Endothelial cell of umbilical vein (primary cell): ENCODE measurements at regions of chr15 and their contacts with region 1.

Region 1: GRCh38 chr15:35697549-35698299 is 151.8 kb upstream of the DPH6 start:
- DNase-seq: peak; percentile 97
- H3K4me3 ChIP-seq: peak overlapping the region in 1 of 3 experiments; percentile 18
- H3K27ac ChIP-seq: peak overlapping the region; percentile 92
- H3K4me1 ChIP-seq: peaks cover 37% of the 10 kb centered on the region
- H3K27me3 ChIP-seq: no peaks in the 10 kb centered on the region
- CTCF ChIP-seq: peak; percentile 13 to 19
- POLR2A ChIP-seq: peak; percentile 25

Region 2: DNA sequence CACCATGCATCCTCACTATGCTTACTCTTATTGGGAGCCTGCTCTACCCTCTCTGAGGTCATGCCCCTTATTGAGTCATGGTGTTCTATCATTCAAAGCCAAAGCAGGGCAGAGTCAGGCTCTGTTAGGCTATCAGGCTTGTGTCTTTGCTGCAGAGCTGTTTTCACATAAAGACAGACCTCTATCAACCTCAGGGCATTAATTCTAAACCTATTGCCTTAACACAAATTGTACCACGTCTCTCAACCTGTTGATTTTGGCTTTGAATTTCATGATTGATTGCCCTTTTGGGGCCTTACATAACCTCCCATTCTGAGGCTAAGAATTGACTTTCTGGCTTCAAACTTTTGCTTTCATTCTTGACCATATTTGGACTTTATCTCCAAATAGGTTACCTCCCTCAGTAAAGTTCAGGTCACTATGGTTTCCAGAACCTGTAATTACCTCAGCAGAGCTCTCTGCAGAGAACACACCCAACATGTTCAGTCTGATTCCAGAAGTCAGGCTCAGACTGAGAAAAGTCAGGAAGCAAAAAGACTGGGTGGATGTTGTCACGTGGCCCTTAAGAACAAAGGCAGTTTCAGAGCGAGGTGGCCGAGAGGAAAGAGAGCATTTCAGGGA is 391.3 kb before region 1 on chr15:
- CTCF ChIA-PET with region 1: no interaction called
- POLR2A ChIA-PET with region 1: no interaction called
- dilution Hi-C with region 1: no loop called
- intact Hi-C with region 1: loop called (anchors 5 kb)
- DNase-seq: peak; percentile 83
- H3K4me3 ChIP-seq: peak overlapping the region in 1 of 3 experiments; percentile 12
- H3K27ac ChIP-seq: peak overlapping the region; percentile 99
- H3K4me1 ChIP-seq: peaks cover 60% of the 10 kb centered on the region
- H3K27me3 ChIP-seq: no peaks in the 10 kb centered on the region
- CTCF ChIP-seq: no peak
- POLR2A ChIP-seq: no peak

Region 3: GRCh38 chr15:35657679-35658311 is 39.9 kb before region 1 on chr15:
- CTCF ChIA-PET with region 1: no interaction called
- POLR2A ChIA-PET with region 1: no interaction called
- dilution Hi-C with region 1: no loop called
- intact Hi-C with region 1: no loop called
- DNase-seq: no peak
- H3K4me3 ChIP-seq: no peak overlapping the region
- H3K27ac ChIP-seq: no peak overlapping the region
- H3K4me1 ChIP-seq: no peaks in the 10 kb centered on the region
- H3K27me3 ChIP-seq: peaks cover 0 to 2% of the 10 kb centered on the region in 2 experiments
- CTCF ChIP-seq: no peak
- POLR2A ChIP-seq: no peak

Region 4: GRCh38 chr15:35674873-35675781 is 22.6 kb before region 1 on chr15:
- CTCF ChIA-PET with region 1: interaction called, 16 read pairs
- POLR2A ChIA-PET with region 1: interaction called, 10 read pairs
- dilution Hi-C with region 1: no loop called
- intact Hi-C with region 1: loop called (anchors 1 kb)
- DNase-seq: peak; percentile 62
- H3K4me3 ChIP-seq: no peak overlapping the region
- H3K27ac ChIP-seq: no peak overlapping the region
- H3K4me1 ChIP-seq: peaks cover 46% of the 10 kb centered on the region
- H3K27me3 ChIP-seq: no peaks in the 10 kb centered on the region
- CTCF ChIP-seq: no peak
- POLR2A ChIP-seq: no peak

Region 5: DNA sequence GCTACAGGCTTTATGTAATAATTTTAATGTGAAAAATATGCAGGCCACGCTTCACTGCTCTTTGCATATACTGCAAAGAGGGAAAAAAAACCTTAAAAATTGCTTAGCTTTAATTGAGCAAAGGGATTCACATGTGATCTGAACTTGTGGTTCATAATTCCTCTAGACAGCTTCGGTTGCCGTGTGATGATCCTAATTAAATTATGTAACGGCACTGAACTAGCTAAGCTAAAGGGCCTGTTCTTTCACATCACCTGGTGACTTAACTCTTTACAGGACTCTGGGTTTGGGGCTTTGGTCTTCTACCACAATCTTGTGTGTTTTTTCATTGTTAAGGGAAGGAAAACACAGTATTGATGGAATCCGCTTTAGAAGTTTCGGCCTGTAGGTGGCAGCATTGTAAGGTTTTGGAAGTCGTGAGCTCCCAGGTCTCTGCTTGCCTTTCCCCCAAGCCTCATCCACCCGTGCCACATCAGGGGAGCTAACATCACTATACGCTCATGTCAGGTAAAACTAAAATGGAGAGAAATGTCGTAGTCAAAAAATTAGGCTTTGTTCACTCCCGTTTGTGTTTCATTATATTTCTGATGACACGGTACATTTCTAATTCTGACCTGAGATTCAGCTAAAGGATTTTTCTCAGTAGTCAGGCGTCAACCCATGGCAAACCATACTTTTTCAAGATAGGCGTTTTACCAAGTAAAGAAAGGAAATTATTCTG is 53.8 kb after region 1 on chr15:
- CTCF ChIA-PET with region 1: interaction called, 44 read pairs
- POLR2A ChIA-PET with region 1: no interaction called
- dilution Hi-C with region 1: no loop called
- intact Hi-C with region 1: loop called (anchors 1 kb)
- DNase-seq: peak; percentile 85
- H3K4me3 ChIP-seq: no peak overlapping the region
- H3K27ac ChIP-seq: no peak overlapping the region
- H3K4me1 ChIP-seq: peaks cover 3% of the 10 kb centered on the region
- H3K27me3 ChIP-seq: no peaks in the 10 kb centered on the region
- CTCF ChIP-seq: peak; percentile 73 to 77
- POLR2A ChIP-seq: no peak

Region 6: GRCh38 chr15:36039996-36040572 is 342.4 kb after region 1 on chr15:
- CTCF ChIA-PET with region 1: no interaction called
- POLR2A ChIA-PET with region 1: no interaction called
- dilution Hi-C with region 1: no loop called
- intact Hi-C with region 1: no loop called
- DNase-seq: no peak
- H3K4me3 ChIP-seq: no peak overlapping the region
- H3K27ac ChIP-seq: no peak overlapping the region
- H3K4me1 ChIP-seq: no peaks in the 10 kb centered on the region
- H3K27me3 ChIP-seq: no peaks in the 10 kb centered on the region
- CTCF ChIP-seq: no peak
- POLR2A ChIP-seq: no peak

Region 7: DNA sequence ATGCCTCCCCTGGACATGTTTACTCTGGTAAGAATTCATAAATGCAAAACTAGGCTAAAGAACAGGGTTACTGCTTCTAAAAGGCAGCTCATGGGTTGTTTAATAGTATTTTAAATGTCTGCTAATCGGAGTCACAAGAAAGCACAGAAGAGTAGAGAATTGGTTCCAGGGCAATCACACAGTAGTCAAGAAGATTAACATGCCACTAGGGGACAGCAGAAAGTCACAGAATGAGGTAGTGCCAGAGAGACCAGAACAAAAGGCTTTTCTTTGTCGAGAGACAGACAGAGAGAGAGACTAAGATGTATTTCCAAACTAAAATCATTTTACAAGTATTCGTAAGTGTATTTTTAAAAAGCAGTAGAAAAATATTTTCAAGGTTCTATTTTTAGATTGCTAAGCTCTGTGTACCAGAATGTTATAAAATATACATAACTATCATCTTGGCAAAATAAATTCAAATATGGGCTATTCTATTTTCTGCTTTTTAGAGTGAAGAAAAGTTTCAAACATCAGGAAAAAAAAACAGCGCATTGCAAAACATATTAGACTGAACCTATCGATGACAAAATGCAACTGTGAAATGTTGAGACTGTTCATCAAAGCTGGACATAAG is 803.4 kb after region 1 on chr15:
- CTCF ChIA-PET with region 1: interaction called, 4 read pairs
- POLR2A ChIA-PET with region 1: no interaction called
- dilution Hi-C with region 1: no loop called
- intact Hi-C with region 1: loop called (anchors 5 kb)
- DNase-seq: peak; percentile 69
- H3K4me3 ChIP-seq: no peak overlapping the region
- H3K27ac ChIP-seq: no peak overlapping the region
- H3K4me1 ChIP-seq: peaks cover 4% of the 10 kb centered on the region
- H3K27me3 ChIP-seq: no peaks in the 10 kb centered on the region
- CTCF ChIP-seq: peak; percentile 55 to 64
- POLR2A ChIP-seq: no peak

Region 8: DNA sequence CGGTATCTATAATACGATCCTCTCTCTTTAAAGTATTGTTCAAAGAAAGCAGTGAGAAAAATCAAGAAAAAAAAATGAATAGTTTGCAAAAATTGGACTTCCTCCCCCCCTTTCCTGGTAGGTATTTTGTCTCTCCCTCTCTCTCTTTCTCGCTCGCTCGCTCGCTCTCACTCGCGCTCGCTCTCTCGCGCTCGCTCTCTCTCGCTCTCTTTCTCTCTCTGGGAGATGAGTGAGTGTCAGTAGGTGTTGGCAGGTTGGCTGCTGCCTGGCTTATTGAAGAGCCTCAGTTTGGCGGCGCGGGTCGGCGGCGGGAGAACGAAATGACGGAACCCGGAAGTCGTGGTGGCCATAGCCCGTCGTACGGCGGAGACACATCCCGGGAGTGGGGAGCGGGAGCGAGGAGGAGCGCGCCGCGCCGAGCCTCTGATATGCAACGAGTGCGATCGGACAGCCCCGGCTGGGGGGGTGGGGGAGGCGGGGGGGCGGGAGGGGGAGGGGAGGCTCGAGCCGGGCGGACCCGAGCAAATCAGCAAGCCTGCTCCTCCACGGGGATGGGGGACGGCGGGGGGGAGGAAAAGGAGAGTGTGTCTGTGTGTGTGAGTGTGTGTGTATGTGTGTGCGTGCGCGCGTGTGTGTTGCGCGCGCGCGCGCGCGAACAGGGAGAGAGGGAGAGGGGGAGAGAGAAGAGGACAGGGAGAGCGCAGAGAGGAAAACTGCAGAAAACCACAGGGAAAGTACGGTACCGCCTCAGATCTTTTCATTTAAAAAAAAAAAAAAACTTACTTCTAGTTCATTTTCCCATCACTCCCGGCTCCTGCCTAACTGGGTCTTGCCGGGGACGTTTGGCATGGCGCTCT is 1402.6 kb after region 1 on chr15 and contains the start of gene MEIS2:
- CTCF ChIA-PET with region 1: no interaction called
- POLR2A ChIA-PET with region 1: no interaction called
- dilution Hi-C with region 1: no loop called
- intact Hi-C with region 1: loop called (anchors 2 kb)
- DNase-seq: peak; percentile 87
- H3K4me3 ChIP-seq: peak within 1 kb of the TSS; percentile 89 to 95 (median 92)
- H3K27ac ChIP-seq: peak within 1 kb of the TSS; percentile 83
- H3K4me1 ChIP-seq: peaks cover 22% of the 10 kb centered on the region
- H3K27me3 ChIP-seq: peaks cover 12 to 30% of the 10 kb centered on the region in 2 experiments
- CTCF ChIP-seq: no peak
- POLR2A ChIP-seq: no peak
- total RNA-seq, gene MEIS2: 22.5 and 27.1 TPM in 2 replicates